Ascending aorta (tissue), 2 donors: ENCODE measurements at regions of chr19 and their contacts with region 1.

Region 1: GRCh38 chr19:14496028-14496833 is at the start of gene GIPC1:
- DNase-seq: peak; percentile 72 to 97
- H3K4me3 ChIP-seq: peak within 1 kb of the TSS; percentile 90 to 93
- H3K27ac ChIP-seq: peak within 1 kb of the TSS; percentile 36 to 53
- H3K4me1 ChIP-seq: peaks cover 0 to 17% of the 10 kb centered on the region in 2 donors
- H3K27me3 ChIP-seq: no peaks in the 10 kb centered on the region
- CTCF ChIP-seq: no peak
- total RNA-seq, gene GIPC1: 123 TPM

Region 2: GRCh38 chr19:14081325-14082093 is 414.7 kb before region 1 on chr19:
- intact Hi-C with region 1: loop called (anchors 5 kb)
- DNase-seq: peak; percentile 94 to 99
- H3K4me3 ChIP-seq: peak overlapping the region; percentile 80 to 93
- H3K27ac ChIP-seq: peak overlapping the region; percentile 92 to 97
- H3K4me1 ChIP-seq: peaks cover 4 to 14% of the 10 kb centered on the region in 2 donors
- H3K27me3 ChIP-seq: no peaks in the 10 kb centered on the region
- CTCF ChIP-seq: no peak

Region 3: GRCh38 chr19:14271840-14272239 is 224.4 kb before region 1 on chr19:
- intact Hi-C with region 1: no loop called
- DNase-seq: no peak
- H3K4me3 ChIP-seq: no peak overlapping the region
- H3K27ac ChIP-seq: no peak overlapping the region
- H3K4me1 ChIP-seq: no peaks in the 10 kb centered on the region
- H3K27me3 ChIP-seq: no peaks in the 10 kb centered on the region
- CTCF ChIP-seq: no peak

Region 4: DNA sequence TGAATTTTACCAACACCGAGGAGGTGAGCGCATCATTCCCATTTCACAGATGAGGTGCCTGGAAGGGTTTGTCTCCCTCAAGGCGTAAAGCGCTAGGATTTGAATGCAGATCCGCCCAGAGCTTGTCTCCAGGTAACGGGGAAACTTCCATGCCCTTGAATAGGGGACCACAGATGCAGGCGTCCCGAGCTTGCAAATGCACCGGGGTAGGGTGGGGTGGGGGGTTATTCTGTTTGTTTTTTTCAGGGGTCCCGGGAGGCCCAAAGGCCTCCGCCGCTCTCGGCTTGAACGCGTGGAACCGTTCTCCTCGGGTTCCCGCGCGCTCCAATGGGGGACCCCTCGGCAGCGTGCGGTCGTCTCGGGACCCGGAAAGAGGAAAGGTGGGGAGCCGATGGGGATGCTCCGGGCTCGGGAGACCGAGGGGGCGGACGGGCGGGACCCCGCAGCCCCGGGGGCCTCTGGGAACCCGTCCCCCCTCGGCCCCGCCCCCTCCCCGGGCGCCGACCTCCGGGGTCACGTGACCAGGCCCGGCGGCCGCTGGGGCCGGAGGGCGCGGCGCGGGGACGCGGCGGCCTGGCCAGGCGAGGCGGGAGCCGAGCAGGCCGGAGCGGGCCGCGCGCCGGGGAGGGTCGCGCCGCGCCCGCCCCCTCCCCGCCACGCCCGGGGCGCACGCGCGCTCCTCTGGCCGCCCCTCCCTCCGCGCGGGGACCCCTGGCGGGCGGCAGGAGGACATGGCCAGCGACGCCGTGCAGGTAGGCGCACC is 63.3 kb before region 1 on chr19 and contains the start of gene PKN1:
- intact Hi-C with region 1: no loop called
- DNase-seq: no peak
- H3K4me3 ChIP-seq: peak within 1 kb of the TSS; percentile 77 to 98
- H3K27ac ChIP-seq: peak within 1 kb of the TSS; percentile 78 to 82
- H3K4me1 ChIP-seq: peaks cover 3 to 19% of the 10 kb centered on the region in 2 donors
- H3K27me3 ChIP-seq: no peaks in the 10 kb centered on the region
- CTCF ChIP-seq: peak in 1 of 3 experiments; percentile 10
- total RNA-seq, gene PKN1: 231 TPM

Region 5: DNA sequence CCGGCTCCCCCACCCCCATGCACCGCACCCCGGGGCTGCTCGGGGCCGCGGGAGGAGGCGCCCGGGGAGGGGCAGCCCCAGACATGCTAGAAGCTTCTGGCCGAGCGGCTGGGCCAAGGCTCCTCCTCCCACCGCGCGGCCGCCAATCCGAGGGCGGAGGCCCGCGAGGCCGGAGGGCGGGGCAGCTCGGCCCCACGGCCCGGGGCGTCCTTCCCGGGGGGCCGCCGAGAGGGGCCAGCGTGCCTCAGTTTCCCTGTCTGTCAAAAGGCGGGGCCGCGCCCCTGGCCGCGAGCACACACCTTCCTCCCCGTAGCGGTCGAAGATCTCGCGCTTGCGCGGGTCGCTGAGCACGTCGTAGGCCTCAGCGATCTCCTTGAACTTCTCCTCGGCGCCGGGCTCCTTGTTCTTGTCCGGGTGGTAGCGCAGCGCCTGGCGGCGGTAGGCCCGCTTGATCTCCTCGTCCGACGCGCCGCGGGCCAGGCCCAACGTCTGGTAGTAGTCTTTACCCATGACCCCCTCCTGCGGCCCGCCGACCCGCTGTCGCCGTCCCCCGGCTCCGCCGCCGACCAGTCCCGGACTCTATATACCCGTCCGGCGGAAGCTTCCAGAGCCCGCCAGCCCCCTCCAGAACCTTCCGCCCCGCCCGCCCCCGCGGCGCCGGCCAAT is 21.7 kb after region 1 on chr19 and contains the start of gene DNAJB1:
- intact Hi-C with region 1: loop called (anchors 1 kb)
- DNase-seq: peak; percentile 29 to 88
- H3K4me3 ChIP-seq: peak within 1 kb of the TSS; percentile 96 to 98
- H3K27ac ChIP-seq: peak within 1 kb of the TSS; percentile 99
- H3K4me1 ChIP-seq: peaks cover 8 to 34% of the 10 kb centered on the region in 2 donors
- H3K27me3 ChIP-seq: no peaks in the 10 kb centered on the region
- CTCF ChIP-seq: no peak
- total RNA-seq, gene DNAJB1: 73.8 TPM

Region 6: DNA sequence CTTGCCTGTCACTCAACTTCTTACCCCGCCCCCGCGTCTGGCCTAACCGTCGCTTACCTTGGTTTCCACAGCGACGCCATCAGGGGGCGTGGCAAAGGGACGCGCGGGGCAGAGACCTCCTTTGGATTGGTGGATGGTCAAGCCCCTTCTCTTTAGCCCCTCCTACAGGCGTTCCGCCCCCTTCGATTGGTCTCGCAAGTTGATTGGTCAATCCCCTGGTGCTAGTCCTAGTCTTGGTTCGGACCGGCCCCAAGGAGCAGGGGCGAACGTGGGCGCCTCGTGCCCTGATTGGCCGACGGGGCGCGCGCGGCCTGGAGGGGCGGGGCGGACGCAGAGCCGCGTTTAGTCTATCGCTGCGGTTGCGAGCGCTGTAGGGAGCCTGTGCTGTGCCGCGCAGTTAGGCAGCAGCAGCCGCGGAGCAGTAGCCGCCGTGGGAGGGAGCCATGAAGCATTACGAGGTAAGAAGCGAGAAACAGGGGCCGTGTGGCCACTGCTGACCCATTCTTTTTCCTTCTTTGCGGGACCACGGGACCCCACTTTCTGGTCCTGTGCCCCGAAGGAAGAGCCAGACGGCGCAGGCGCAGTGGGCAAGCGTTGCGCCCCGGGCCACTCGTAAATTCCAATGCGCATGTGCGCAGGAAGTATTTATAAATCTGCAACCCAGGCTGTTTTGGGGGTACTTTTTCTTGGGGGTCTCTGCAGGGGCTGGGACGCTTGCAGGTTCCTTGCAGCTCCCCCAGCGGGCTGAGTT is 33.2 kb after region 1 on chr19 and contains the start of gene TECR:
- intact Hi-C with region 1: loop called (anchors 1 kb)
- DNase-seq: peak; percentile 100
- H3K4me3 ChIP-seq: peak within 1 kb of the TSS; percentile 79 to 91
- H3K27ac ChIP-seq: peak within 1 kb of the TSS; percentile 71 to 84
- H3K4me1 ChIP-seq: peaks cover 0 to 9% of the 10 kb centered on the region in 2 donors
- H3K27me3 ChIP-seq: no peaks in the 10 kb centered on the region
- CTCF ChIP-seq: no peak
- total RNA-seq, gene TECR: 88.7 TPM

Region 7: DNA sequence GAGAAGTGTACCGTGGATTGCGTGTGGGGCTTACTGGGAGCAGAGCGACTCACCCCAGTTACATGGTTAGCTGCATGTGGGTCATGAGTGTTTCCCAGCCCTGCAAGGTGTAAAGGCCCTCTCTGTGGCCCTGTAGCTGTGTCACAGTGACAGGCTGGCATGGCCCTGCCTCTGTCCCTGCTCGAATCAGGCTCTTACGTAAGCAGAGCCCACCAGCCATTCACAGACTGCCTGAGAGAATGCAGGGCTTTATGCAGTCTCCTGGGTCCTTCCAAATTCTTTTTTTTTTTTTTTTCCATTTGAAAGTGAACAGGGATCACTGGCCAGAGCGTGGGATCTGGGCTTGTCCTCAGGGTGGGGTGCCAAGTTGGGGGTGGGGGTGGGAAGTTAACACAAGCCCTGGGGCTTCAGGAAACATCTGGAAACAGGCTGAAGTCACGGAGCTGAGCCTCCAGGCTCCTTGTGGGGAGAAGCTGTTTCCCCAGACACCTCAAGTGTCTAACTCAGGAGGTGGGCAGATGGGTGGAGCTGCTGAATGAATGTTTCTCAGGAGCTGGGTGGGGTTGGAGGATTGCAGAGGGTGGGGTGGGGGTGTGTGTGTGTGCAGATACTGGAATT is 46.6 kb after region 1 on chr19:
- intact Hi-C with region 1: no loop called
- DNase-seq: no peak
- H3K4me3 ChIP-seq: no peak overlapping the region
- H3K27ac ChIP-seq: no peak overlapping the region
- H3K4me1 ChIP-seq: no peaks in the 10 kb centered on the region
- H3K27me3 ChIP-seq: no peaks in the 10 kb centered on the region
- CTCF ChIP-seq: no peak

Region 8: GRCh38 chr19:14689598-14690503 is 193.6 kb after region 1 on chr19 and contains the start of gene ZNF333:
- intact Hi-C with region 1: loop called (anchors 5 kb)
- DNase-seq: peak; percentile 84 to 99
- H3K4me3 ChIP-seq: peak within 1 kb of the TSS; percentile 76 to 97
- H3K27ac ChIP-seq: peak within 1 kb of the TSS; percentile 86 to 93
- H3K4me1 ChIP-seq: peaks cover 0 to 10% of the 10 kb centered on the region in 2 donors
- H3K27me3 ChIP-seq: no peaks in the 10 kb centered on the region
- CTCF ChIP-seq: no peak
- total RNA-seq, gene ZNF333: 33.7 TPM